ENCODE measurements at regions of chr1 and their contacts with region 1.

Region 1: DNA sequence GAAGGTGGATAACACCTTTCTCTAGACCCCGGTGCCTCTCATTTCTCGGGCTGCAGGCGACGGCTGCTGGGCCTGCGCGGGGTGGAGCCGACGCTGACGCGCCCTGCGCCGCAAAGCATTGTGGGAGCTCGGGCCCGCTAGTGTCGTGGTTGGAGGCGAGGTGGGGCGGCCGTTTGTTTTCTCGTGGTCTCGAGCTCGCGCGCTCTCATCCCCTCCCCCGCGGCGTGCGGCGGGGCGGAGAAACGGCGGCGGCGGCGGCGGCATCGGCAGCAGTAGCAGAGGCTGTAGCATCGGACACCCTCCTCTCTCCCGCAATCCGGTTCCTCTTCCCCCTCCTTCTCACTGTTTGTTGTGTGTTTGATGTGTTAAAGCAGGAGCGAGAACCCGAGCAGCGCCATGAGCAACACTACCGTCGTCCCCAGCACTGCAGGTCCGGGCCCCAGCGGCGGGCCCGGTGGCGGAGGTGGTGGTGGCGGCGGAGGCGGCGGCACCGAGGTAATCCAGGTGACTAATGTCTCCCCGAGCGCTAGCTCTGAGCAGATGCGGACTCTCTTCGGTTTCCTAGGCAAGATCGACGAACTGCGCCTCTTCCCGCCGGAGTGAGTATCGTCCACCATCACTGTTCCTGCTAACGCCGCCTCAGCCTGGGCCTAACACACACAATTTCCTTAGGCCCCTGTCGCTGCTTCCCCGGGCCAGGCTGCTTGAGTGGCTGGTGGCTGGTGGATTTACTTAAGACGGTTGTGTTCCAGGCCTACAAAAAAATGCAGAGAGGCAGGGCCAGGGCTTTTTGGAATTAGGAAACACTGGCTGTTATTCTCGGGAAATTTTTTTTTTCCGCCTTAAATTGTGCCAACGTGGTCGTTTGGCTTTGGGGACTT is at the start of gene SRSF11:
- DNase-seq: peak; percentile 94 to 97 (median 96)
- H3K4me3 ChIP-seq: peak within 1 kb of the TSS; percentile 88
- H3K4me3 Mint-ChIP-seq: peak within 1 kb of the TSS; percentile 92 to 98 (median 94)
- H3K27ac ChIP-seq: peak within 1 kb of the TSS; percentile 98
- H3K27ac Mint-ChIP-seq: peak within 1 kb of the TSS; percentile 97 to 99 (median 98)
- H3K4me1 ChIP-seq: peaks cover 38% of the 10 kb centered on the region
- H3K4me1 Mint-ChIP-seq: peaks cover 49 to 68% (median 64%) of the 10 kb centered on the region in 3 donors
- H3K27me3 ChIP-seq: no peaks in the 10 kb centered on the region
- H3K27me3 Mint-ChIP-seq: peaks cover 0 to 2% of the 10 kb centered on the region in 2 donors
- total RNA-seq, gene SRSF11: 160 TPM

Region 2: GRCh38 chr1:70117046-70117445 is 104.4 kb before region 1 on chr1:
- CTCF ChIA-PET with region 1: no interaction called
- POLR2A ChIA-PET with region 1: no interaction called
- DNase-seq: no peak
- H3K4me3 ChIP-seq: no peak overlapping the region
- H3K4me3 Mint-ChIP-seq: no peak overlapping the region
- H3K27ac ChIP-seq: no peak overlapping the region
- H3K27ac Mint-ChIP-seq: no peak overlapping the region
- H3K4me1 ChIP-seq: no peaks in the 10 kb centered on the region
- H3K4me1 Mint-ChIP-seq: no peaks in the 10 kb centered on the region
- H3K27me3 ChIP-seq: no peaks in the 10 kb centered on the region
- H3K27me3 Mint-ChIP-seq: peaks cover 11 to 15% of the 10 kb centered on the region in 2 donors

Region 3: DNA sequence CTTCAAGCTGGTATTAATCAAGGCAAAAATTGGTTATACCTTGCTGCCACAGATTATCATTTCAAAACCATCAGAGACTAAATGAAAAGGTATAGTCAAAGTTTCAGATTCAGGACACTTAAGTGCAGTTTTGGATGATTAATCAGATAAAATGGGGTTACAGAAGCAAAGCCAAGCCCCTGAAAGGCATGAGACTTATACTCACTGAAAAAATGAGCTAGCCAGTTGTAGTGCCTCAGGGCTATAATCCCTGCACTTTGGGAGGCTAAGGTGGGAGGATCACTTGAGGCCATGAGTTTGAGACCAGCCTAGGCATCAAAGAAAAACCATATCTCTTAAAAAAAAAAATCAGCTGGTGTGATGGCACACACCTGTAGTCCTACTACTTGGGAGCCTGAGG is 31.3 kb before region 1 on chr1:
- CTCF ChIA-PET with region 1: interaction called, 3 read pairs
- POLR2A ChIA-PET with region 1: interaction called, 12 read pairs
- DNase-seq: no peak
- H3K4me3 ChIP-seq: no peak overlapping the region
- H3K4me3 Mint-ChIP-seq: no peak overlapping the region
- H3K27ac ChIP-seq: no peak overlapping the region
- H3K27ac Mint-ChIP-seq: no peak overlapping the region
- H3K4me1 ChIP-seq: no peaks in the 10 kb centered on the region
- H3K4me1 Mint-ChIP-seq: peaks cover 12 to 45% (median 33%) of the 10 kb centered on the region in 3 donors
- H3K27me3 ChIP-seq: no peaks in the 10 kb centered on the region
- H3K27me3 Mint-ChIP-seq: no peaks in the 10 kb centered on the region

Region 4: GRCh38 chr1:70205434-70206118 is 15.9 kb before region 1 on chr1 and contains the start of gene LRRC40:
- CTCF ChIA-PET with region 1: interaction called, 10 read pairs
- POLR2A ChIA-PET with region 1: interaction called, 17 read pairs
- DNase-seq: peak; percentile 92 to 97 (median 95)
- H3K4me3 ChIP-seq: peak within 1 kb of the TSS; percentile 74
- H3K4me3 Mint-ChIP-seq: peak within 1 kb of the TSS; percentile 94 to 99 (median 98)
- H3K27ac ChIP-seq: peak within 1 kb of the TSS; percentile 96
- H3K27ac Mint-ChIP-seq: peak within 1 kb of the TSS; percentile 99 to 100 (median 100)
- H3K4me1 ChIP-seq: peaks cover 37% of the 10 kb centered on the region
- H3K4me1 Mint-ChIP-seq: peaks cover 76 to 94% (median 84%) of the 10 kb centered on the region in 3 donors
- H3K27me3 ChIP-seq: no peaks in the 10 kb centered on the region
- H3K27me3 Mint-ChIP-seq: peaks cover 0 to 4% of the 10 kb centered on the region in 2 donors
- total RNA-seq, gene LRRC40: 20.9 to 23.1 TPM

Region 5: GRCh38 chr1:70290218-70290617 is 68.7 kb after region 1 on chr1:
- CTCF ChIA-PET with region 1: no interaction called
- POLR2A ChIA-PET with region 1: no interaction called
- DNase-seq: no peak
- H3K4me3 ChIP-seq: no peak overlapping the region
- H3K4me3 Mint-ChIP-seq: no peak overlapping the region
- H3K27ac ChIP-seq: no peak overlapping the region
- H3K27ac Mint-ChIP-seq: peak overlapping the region in 2 of 8 donors; percentile 12 to 15
- H3K4me1 ChIP-seq: no peaks in the 10 kb centered on the region
- H3K4me1 Mint-ChIP-seq: peaks cover 3 to 12% (median 7%) of the 10 kb centered on the region in 3 donors
- H3K27me3 ChIP-seq: no peaks in the 10 kb centered on the region
- H3K27me3 Mint-ChIP-seq: no peaks in the 10 kb centered on the region

Region 6: GRCh38 chr1:70354332-70355110 is 133.0 kb after region 1 on chr1 and contains the start of gene ANKRD13C:
- CTCF ChIA-PET with region 1: no interaction called
- POLR2A ChIA-PET with region 1: interaction called, 25 read pairs
- DNase-seq: peak; percentile 81 to 95 (median 94)
- H3K4me3 ChIP-seq: peak within 1 kb of the TSS; percentile 78
- H3K4me3 Mint-ChIP-seq: peak within 1 kb of the TSS; percentile 94 to 99 (median 96)
- H3K27ac ChIP-seq: peak within 1 kb of the TSS; percentile 98
- H3K27ac Mint-ChIP-seq: peak within 1 kb of the TSS; percentile 95 to 100 (median 98)
- H3K4me1 ChIP-seq: peaks cover 36% of the 10 kb centered on the region
- H3K4me1 Mint-ChIP-seq: peaks cover 43 to 61% (median 58%) of the 10 kb centered on the region in 3 donors
- H3K27me3 ChIP-seq: no peaks in the 10 kb centered on the region
- H3K27me3 Mint-ChIP-seq: peaks cover 0 to 6% of the 10 kb centered on the region in 2 donors
- total RNA-seq, gene ANKRD13C: 29.4 to 30.9 TPM

Region 7: DNA sequence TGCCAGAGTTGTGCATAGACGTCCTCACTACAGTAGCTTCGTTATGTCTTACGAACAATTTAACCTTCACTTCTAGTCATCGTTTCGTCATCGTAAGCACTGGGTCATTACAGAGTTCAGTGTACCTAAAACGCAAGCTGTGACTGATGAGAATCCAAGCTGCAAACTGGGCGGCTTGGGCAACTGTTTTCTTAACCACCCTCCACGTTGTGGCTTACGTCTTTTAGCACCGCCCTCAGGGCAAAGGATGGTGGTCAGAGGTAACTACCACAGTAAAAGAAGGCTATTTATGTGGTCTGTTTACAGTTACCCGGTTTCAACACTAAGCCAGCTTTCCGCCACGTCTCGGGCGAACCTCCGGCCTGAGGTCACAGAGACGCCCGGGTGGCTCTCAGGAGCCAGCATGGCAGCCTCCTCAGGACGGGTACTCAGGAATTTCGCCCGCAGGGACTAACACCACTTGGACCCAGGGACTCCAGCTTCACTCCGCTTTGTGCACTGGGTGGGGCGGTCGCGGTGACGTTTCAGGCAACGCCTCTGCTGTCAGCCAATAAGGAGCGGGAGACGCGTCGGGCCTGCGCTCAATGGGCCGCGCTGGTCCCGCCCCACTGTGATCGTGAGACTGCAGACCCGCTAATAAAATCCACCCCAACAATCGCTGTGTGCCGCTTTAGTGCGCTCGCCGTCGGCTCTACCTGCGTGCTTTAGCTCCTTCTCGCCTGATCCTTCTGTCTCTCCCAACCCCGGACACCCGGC is 189.3 kb after region 1 on chr1 and contains the start of gene CTH:
- CTCF ChIA-PET with region 1: interaction called, 3 read pairs
- POLR2A ChIA-PET with region 1: interaction called, 14 read pairs
- DNase-seq: peak; percentile 90 to 95 (median 92)
- H3K4me3 ChIP-seq: peak within 1 kb of the TSS; percentile 94
- H3K4me3 Mint-ChIP-seq: peak within 1 kb of the TSS; percentile 94 to 99 (median 97)
- H3K27ac ChIP-seq: peak within 1 kb of the TSS; percentile 92
- H3K27ac Mint-ChIP-seq: peak within 1 kb of the TSS; percentile 96 to 98 (median 98)
- H3K4me1 ChIP-seq: peaks cover 18% of the 10 kb centered on the region
- H3K4me1 Mint-ChIP-seq: peaks cover 23 to 28% (median 26%) of the 10 kb centered on the region in 3 donors
- H3K27me3 ChIP-seq: no peaks in the 10 kb centered on the region
- H3K27me3 Mint-ChIP-seq: peaks cover 4 to 12% of the 10 kb centered on the region in 2 donors
- total RNA-seq, gene CTH: 9.0 to 9.5 TPM

Measured in CD8-positive, alpha-beta memory T cell (primary cell).